HCT116 (cell line): ENCODE measurements at regions of chr19 and their contacts with region 1.

Region 1: GRCh38 chr19:11380653-11381534 is 3.2 kb downstream of the EPOR start:
- DNase-seq: peak; percentile 97
- ATAC-seq: peak; percentile 70
- H3K4me3 ChIP-seq: peak overlapping the region; percentile 69 to 71
- H3K27ac ChIP-seq: peak overlapping the region; percentile 81
- H3K4me1 ChIP-seq: peaks cover 48 to 80% of the 10 kb centered on the region in 2 experiments
- H3K27me3 ChIP-seq: no peaks in the 10 kb centered on the region
- CTCF ChIP-seq: peak in 2 of 3 experiments; percentile 67 to 70; a peak in 4 of 6 replicates
- POLR2A ChIP-seq: peak; percentile 95
- RAD21 ChIP-seq: no peak

Region 2: DNA sequence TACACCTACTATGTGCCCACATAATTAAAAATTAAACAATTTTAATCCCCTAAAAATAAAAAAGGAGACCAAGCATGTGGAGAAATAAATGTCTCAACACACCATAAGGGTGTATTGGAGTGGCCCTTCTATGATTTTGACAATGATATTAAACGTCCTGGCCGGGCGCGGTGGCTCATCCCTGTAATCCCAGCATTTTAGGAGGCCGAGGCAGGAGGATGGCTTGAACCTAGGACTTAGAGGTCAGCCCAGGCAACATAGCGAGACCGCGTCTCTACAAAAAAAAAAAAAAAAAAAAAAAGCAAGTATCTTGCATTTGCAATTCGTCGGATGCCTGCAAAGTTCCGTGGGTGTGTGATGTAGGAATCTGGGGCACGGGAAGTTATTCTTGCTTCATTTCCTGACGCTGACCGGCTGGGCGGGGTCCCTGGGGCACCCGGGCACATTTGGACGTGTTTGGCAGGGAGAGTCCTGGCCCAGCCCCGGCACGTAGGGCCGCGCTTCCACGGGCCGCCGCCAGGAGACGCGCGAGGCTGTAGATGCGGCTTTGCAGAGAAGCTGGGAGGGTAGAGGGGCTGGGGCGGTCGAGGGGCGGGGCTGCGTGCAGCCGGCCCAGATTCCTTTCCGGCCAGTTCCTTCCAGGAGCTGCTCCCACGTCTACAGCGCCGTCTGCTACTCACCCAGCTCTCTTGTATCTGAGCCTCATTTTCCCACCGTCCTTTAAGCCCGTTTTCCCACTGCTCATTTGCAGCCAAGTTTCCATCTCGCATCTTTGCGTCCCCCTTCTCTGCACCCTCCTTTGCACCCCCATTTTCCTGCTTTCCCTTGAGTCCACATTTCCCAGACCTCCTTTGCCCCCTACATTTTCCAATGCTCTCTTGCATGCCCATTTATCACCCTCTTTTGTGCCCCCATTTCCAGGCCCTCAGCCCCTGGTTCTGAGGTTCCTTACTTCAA is 87.2 kb before region 1 on chr19:
- CTCF ChIA-PET with region 1: interaction called, 12 read pairs
- POLR2A ChIA-PET with region 1: interaction called, 3 read pairs
- RAD21 ChIA-PET with region 1: interaction called in 1 of 2 experiments, 3 read pairs
- intact Hi-C with region 1: loop called (anchors 5 kb)
- DNase-seq: peak; percentile 79
- ATAC-seq: peak; percentile 99
- H3K4me3 ChIP-seq: peak overlapping the region; percentile 36 to 51
- H3K27ac ChIP-seq: peak overlapping the region; percentile 39
- H3K4me1 ChIP-seq: peaks cover 18 to 30% of the 10 kb centered on the region in 2 experiments
- H3K27me3 ChIP-seq: no peaks in the 10 kb centered on the region
- CTCF ChIP-seq: peak; percentile 92 to 96 (median 95)
- POLR2A ChIP-seq: no peak
- RAD21 ChIP-seq: peak; percentile 99

Region 3: DNA sequence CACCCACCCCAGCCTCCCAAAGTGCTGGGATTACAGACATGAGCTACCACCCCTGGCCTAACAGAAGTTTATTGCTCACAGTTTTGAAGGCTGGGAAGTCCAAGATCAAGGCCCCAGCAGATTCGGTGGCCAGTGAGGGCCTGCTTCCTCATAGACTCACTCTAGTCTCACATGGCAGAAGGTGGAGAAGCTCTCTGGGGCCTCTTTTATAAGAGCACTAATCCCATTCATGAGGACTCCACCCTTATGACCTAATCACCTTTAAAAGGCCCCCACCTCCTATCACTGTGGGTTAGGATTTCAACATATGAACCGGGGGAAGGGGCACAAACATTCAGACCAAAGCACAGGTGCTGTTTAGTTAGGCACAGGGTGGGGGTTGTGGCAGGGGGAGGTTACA is 13.4 kb before region 1 on chr19:
- CTCF ChIA-PET with region 1: interaction called, 11 read pairs
- POLR2A ChIA-PET with region 1: interaction called, 8 read pairs
- RAD21 ChIA-PET with region 1: no interaction called
- intact Hi-C with region 1: no loop called
- DNase-seq: no peak
- ATAC-seq: no peak
- H3K4me3 ChIP-seq: no peak overlapping the region
- H3K27ac ChIP-seq: no peak overlapping the region
- H3K4me1 ChIP-seq: no peaks in the 10 kb centered on the region
- H3K27me3 ChIP-seq: no peaks in the 10 kb centered on the region
- CTCF ChIP-seq: no peak
- POLR2A ChIP-seq: no peak
- RAD21 ChIP-seq: no peak

Region 4: DNA sequence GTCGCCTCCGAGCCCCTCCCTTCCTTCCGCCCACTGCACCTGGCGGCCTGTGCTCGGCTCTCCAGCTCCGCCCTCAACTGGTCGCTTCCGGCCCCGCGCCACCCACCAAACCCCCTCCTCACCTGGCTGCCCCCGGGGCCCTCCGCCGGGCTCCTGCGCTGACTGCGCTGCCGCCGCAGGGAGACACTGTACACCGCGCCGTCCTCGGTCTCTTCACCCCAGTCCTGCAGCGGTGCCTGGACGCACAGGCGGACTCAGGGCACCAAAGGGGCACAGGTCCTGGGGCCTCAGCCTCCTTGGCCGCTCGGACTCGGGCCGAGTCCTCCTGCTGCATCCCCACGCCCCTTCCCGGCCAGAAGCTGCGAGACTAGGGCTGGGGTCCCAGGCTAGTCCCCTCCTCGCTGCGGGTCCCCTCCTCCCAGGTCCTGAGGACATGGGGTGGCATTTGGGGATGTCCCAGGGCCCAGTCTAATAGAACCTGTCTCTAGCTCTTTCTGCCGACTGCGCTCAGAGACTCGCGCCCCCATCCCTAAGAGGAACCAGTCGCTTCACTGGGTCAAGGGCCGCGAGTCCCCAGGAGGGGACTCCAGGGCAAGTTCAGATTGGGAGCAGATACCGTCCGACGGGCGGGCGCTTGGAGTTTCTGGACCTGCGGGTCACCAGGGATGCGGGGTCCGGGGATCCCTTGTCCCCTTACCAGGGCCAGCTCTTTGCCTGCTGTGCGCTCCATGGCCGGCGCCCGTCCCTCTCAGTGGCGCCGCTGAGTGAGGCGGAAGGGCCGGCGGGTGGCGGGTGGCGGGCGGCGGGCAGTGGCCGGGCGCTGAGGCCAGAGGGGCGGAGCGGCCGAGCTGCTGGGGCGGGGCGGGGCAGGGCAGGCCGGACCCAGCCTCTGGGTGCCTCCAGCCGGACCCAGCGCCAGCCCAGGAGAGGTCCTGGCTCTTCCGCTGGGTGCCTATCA is 37.9 kb after region 1 on chr19 and contains the start of gene RGL3:
- CTCF ChIA-PET with region 1: interaction called, 40 read pairs
- POLR2A ChIA-PET with region 1: interaction called, 15 read pairs
- RAD21 ChIA-PET with region 1: interaction called in 1 of 2 experiments, 4 read pairs
- intact Hi-C with region 1: loop called (anchors 1 kb)
- DNase-seq: no peak
- ATAC-seq: peak; percentile 84
- H3K4me3 ChIP-seq: peak within 1 kb of the TSS; percentile 93 to 99
- H3K27ac ChIP-seq: peak within 1 kb of the TSS; percentile 99
- H3K4me1 ChIP-seq: peaks cover 9 to 16% of the 10 kb centered on the region in 2 experiments
- H3K27me3 ChIP-seq: no peaks in the 10 kb centered on the region
- CTCF ChIP-seq: no peak
- POLR2A ChIP-seq: no peak
- RAD21 ChIP-seq: no peak
- total RNA-seq, gene RGL3: 99.2 TPM

Region 5: DNA sequence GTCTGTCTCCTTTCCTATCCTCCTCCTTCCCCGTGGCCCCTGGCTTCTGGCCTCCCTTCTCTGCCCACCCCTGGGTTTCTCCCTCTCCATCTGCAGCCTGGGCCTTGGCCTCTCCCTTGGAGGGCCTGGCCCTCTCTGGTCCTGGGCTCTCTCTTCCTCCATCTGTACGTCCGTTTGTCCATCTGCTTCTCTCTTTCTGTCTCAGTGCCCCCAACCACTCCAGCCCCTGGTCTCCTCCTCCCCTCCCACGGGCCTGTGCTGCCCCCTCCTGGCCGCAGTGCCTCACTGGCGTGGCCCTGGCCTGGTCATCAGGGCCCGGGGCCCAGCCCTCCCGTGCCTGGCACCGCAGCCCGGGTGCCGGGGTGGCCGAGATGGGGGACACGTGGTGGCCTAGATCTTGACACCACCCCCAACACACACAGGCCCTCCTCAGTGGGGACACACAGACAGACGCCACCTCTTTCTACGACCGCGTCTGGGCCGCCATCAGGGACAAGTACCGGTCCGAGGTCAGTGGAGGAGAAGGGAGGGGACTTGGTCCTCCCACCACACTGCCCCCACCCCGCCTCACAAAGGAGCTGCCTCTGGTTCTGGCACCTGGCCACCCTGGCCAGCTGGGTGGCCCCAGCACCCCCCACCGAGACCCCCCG is 65.9 kb after region 1 on chr19:
- CTCF ChIA-PET with region 1: interaction called, 18 read pairs
- POLR2A ChIA-PET with region 1: interaction called, 5 read pairs
- RAD21 ChIA-PET with region 1: interaction called in 1 of 2 experiments, 3 read pairs
- intact Hi-C with region 1: loop called (anchors 1 kb)
- DNase-seq: no peak
- ATAC-seq: peak; percentile 92
- H3K4me3 ChIP-seq: no peak overlapping the region
- H3K27ac ChIP-seq: no peak overlapping the region
- H3K4me1 ChIP-seq: no peaks in the 10 kb centered on the region
- H3K27me3 ChIP-seq: no peaks in the 10 kb centered on the region
- CTCF ChIP-seq: peak; percentile 88 to 95 (median 90)
- POLR2A ChIP-seq: no peak
- RAD21 ChIP-seq: peak; percentile 94

Region 6: GRCh38 chr19:11551603-11552235 is 170.8 kb after region 1 on chr19:
- CTCF ChIA-PET with region 1: no interaction called
- POLR2A ChIA-PET with region 1: no interaction called
- RAD21 ChIA-PET with region 1: no interaction called
- intact Hi-C with region 1: no loop called
- DNase-seq: no peak
- ATAC-seq: peak; percentile 83
- H3K4me3 ChIP-seq: no peak overlapping the region
- H3K27ac ChIP-seq: no peak overlapping the region
- H3K4me1 ChIP-seq: no peaks in the 10 kb centered on the region
- H3K27me3 ChIP-seq: no peaks in the 10 kb centered on the region
- CTCF ChIP-seq: peak; percentile 39 to 63 (median 61); a peak in 5 of 6 replicates
- POLR2A ChIP-seq: no peak
- RAD21 ChIP-seq: peak; percentile 61